A673 (cell line): ENCODE measurements at regions of chr11 and their contacts with region 1.

Region 1: GRCh38 chr11:117327567-117328374 is at the start of gene CEP164:
- DNase-seq: peak; percentile 99
- H3K4me3 ChIP-seq: peak within 1 kb of the TSS; percentile 65
- H3K27ac ChIP-seq: peak within 1 kb of the TSS; percentile 78
- H3K4me1 ChIP-seq: peaks cover 7% of the 10 kb centered on the region
- H3K27me3 ChIP-seq: no peaks in the 10 kb centered on the region
- CTCF ChIP-seq: no peak
- total RNA-seq, gene CEP164: 39.4 and 43.3 TPM in 2 replicates

Region 2: DNA sequence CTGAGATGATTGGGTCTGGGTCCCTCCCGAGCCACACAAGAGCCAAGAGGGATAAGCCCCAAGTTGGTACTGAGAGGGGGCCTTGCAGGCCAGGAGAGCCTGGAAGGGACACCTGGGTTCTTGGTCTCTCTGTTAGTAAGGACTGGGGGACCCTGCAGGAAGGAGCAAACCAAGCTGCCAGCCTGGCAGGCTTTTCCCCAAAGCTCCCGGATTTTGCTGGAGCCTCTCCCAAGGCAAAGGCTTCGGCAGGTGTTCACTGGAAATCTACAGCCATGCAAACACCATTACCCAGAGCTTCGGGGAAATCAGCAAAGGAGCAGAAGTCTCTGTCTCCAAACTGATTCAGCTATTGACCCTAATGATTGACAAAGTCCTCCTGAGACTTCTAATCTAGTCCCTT is 1082.9 kb before region 1 on chr11:
- CTCF ChIA-PET with region 1: no interaction called
- POLR2A ChIA-PET with region 1: interaction called, 34 read pairs
- intact Hi-C with region 1: no loop called
- DNase-seq: no peak
- H3K4me3 ChIP-seq: no peak overlapping the region
- H3K27ac ChIP-seq: no peak overlapping the region
- H3K4me1 ChIP-seq: no peaks in the 10 kb centered on the region
- H3K27me3 ChIP-seq: peaks cover 10% of the 10 kb centered on the region
- CTCF ChIP-seq: no peak

Region 3: DNA sequence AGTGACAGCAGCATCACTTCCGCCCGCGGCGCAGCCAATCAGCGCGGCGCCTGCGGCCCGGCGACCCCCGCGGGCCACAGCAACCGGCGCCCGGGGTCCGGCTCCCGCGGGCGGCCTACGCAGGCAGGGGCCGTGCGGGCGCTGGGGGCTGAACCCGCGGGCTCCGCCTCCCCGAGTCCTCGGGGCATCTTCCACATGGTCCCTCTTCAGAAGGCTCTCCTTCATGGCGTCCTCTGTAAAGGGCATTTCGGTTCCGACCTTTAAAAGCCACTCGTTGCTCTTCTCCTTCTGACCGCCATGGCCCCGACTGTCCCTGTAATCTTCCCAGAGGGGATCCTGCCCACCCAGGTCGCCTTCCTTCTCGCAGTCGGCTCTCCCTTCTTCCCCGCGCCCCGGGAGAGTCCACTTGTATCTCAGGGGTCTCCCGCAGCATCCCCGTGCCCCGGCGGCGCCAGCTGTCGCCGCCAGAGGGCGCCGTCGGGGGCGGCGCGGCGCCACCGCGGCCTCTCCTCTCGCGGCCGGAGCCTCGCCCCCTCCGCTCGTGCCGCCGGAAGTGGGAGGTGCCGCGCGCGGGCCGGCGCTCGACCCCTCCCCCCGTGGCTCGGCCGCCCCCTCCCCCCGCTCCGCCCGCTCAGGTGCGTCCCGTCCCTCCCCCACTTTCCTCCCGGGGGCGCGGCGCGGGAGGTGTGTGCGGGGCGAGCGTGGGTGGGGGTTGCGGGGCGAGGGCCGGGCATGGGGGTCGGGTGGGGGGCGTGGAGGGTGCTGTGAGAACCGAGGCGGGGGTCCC is 95.5 kb before region 1 on chr11 and contains the start of gene RNF214:
- CTCF ChIA-PET with region 1: no interaction called
- POLR2A ChIA-PET with region 1: no interaction called
- intact Hi-C with region 1: loop called (anchors 2 kb)
- DNase-seq: peak; percentile 90
- H3K4me3 ChIP-seq: peak within 1 kb of the TSS; percentile 99
- H3K27ac ChIP-seq: peak within 1 kb of the TSS; percentile 88
- H3K4me1 ChIP-seq: peaks cover 14% of the 10 kb centered on the region
- H3K27me3 ChIP-seq: no peaks in the 10 kb centered on the region
- CTCF ChIP-seq: peak; percentile 81
- total RNA-seq, gene RNF214: 37.8 and 50.3 TPM in 2 replicates

Region 4: GRCh38 chr11:117300283-117300663 is 27.5 kb before region 1 on chr11:
- CTCF ChIA-PET with region 1: no interaction called
- POLR2A ChIA-PET with region 1: interaction called, 30 read pairs
- intact Hi-C with region 1: no loop called
- DNase-seq: no peak
- H3K4me3 ChIP-seq: no peak overlapping the region
- H3K27ac ChIP-seq: peak overlapping the region; percentile 5
- H3K4me1 ChIP-seq: peaks cover 8% of the 10 kb centered on the region
- H3K27me3 ChIP-seq: no peaks in the 10 kb centered on the region
- CTCF ChIP-seq: no peak

Region 5: GRCh38 chr11:117316197-117316961 is 11.4 kb before region 1 on chr11 and contains the start of gene BACE1:
- CTCF ChIA-PET with region 1: interaction called, 3 read pairs
- POLR2A ChIA-PET with region 1: interaction called, 4 read pairs
- intact Hi-C with region 1: loop called (anchors 1 kb)
- DNase-seq: peak; percentile 93
- H3K4me3 ChIP-seq: peak within 1 kb of the TSS; percentile 84
- H3K27ac ChIP-seq: peak within 1 kb of the TSS; percentile 55
- H3K4me1 ChIP-seq: peaks cover 3% of the 10 kb centered on the region
- H3K27me3 ChIP-seq: no peaks in the 10 kb centered on the region
- CTCF ChIP-seq: peak; percentile 58
- total RNA-seq, gene BACE1: 13.7 and 15.0 TPM in 2 replicates